ENCODE measurements at regions of chr19 and their contacts with region 1.

Region 1: GRCh38 chr19:48468775-48469288 is 337 bp upstream of the CYTH2 start:
- DNase-seq: peak; percentile 99 to 100 (median 100)
- H3K4me3 ChIP-seq: peak overlapping the region; percentile 77 to 100 (median 98)
- H3K27ac ChIP-seq: peak overlapping the region in 56 of 59 donors; percentile 62 to 100 (median 96)
- H3K27me3 ChIP-seq: no peaks in the 10 kb centered on the region
- CTCF ChIP-seq: peak in 22 of 56 donors; percentile 0 to 46 (median 26)

Region 2: DNA sequence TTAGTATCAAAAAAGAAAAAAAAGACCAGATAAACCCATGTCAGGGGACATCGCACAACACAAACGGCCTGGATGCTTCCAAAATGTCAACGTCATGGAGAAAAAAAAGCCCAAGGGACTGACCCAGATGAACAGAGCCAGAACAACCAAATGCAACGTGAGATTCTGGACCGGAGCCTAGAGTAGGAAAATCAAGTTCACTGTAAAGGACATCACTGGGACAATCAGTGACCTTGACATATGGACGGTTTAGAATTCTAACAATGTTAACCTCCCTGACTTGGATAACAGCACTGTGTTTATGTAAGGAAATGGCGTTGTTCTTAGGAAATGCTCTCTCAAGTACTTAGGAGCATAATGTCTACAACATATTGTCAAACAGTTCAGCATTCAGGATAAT is 158.6 kb before region 1 on chr19:
- intact Hi-C with region 1: loop called in 1 of 2 experiments (anchors 10 kb)
- DNase-seq: no peak
- H3K4me3 ChIP-seq: no peak overlapping the region
- H3K27ac ChIP-seq: no peak overlapping the region
- H3K27me3 ChIP-seq: no peaks in the 10 kb centered on the region
- CTCF ChIP-seq: no peak

Region 3: GRCh38 chr19:48419158-48419920 is 49.5 kb before region 1 on chr19:
- intact Hi-C with region 1: no loop called
- DNase-seq: peak in 5 of 10 donors; percentile 40 to 61 (median 54)
- H3K4me3 ChIP-seq: peak overlapping the region in 3 of 59 donors; percentile 19 to 35 (median 24)
- H3K27ac ChIP-seq: no peak overlapping the region
- H3K27me3 ChIP-seq: peaks cover 0 to 13% (median 0%) of the 10 kb centered on the region in 45 donors
- CTCF ChIP-seq: no peak

Region 4: DNA sequence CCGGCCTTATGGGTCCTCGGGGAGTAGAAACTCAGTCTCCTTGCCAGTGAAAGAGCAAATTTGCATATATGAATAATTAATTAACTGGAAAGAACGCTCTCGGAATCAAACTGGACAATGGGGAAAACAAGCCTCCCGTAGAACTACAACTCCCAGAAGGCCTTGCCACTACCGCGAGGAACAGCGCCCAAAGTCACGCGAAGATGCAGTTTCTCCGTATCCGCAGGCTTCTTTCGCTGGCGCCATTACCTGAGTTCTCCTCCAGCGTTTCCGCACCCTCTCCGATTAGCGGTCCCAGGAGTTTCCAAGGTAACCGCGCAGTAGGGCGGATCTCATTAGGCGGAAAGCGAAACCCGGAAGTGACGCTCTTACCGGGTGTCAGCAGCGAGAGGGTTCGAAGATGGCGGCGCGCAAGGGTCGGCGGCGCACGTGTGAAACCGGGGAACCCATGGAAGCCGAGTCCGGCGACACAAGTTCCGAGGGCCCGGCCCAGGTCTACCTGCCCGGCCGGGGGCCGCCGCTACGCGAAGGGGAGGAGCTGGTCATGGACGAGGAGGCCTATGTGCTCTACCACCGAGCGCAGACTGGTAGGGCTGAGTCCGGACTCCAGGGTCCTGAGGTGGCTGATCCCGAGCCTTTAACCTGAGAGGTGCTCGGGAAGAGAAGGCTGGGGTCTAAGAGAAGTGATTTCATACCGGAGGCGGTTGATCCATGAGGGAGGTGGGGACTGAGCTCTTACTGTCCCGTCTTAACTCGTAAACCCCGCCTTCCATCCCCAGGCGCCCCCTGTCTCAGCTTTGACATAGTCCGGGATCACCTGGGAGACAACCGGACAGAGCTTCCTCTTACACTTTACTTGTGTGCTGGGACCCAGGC is 23.0 kb before region 1 on chr19 and contains the start of gene GRWD1:
- intact Hi-C with region 1: loop called in 1 of 2 experiments (anchors 2 kb)
- DNase-seq: peak; percentile 84 to 94 (median 90)
- H3K4me3 ChIP-seq: peak within 1 kb of the TSS; percentile 58 to 100 (median 95)
- H3K27ac ChIP-seq: peak within 1 kb of the TSS; percentile 85 to 100 (median 97)
- H3K27me3 ChIP-seq: peaks cover 0 to 10% (median 0%) of the 10 kb centered on the region in 45 donors
- CTCF ChIP-seq: peak in 27 of 56 donors; percentile 1 to 68 (median 26)
- total RNA-seq, gene GRWD1: 14.2 to 29.9 (median 20.2) TPM

Region 5: DNA sequence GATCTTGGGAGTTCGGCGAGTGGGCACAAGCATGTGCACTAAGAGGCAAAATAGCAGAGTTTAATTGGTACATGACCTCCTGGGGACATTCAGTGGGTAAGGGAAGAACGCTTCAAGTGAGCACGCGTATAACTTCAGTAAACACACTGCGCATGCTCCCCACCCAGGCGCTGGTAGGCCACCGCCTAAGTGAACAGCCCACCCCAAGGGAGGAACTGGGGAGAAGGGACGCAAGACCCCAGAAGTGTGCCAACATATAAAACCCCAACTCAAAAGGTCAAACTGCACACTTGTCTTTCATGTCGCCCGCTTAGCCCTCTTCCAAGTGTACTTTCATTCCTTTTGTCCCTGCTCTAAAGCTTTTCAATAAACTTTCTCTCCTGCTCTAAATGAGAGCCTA is 214.5 kb after region 1 on chr19:
- intact Hi-C with region 1: no loop called
- DNase-seq: peak in 8 of 10 donors; percentile 29 to 72 (median 56)
- H3K4me3 ChIP-seq: peak overlapping the region in 29 of 59 donors; percentile 12 to 47 (median 31)
- H3K27ac ChIP-seq: peak overlapping the region in 36 of 59 donors; percentile 3 to 75 (median 44)
- H3K27me3 ChIP-seq: no peaks in the 10 kb centered on the region
- CTCF ChIP-seq: peak in 1 of 56 donors; percentile 13

Measured in dorsolateral prefrontal cortex (tissue), 120 donors.